CD4-positive, alpha-beta T cell (primary cell): ENCODE measurements at regions of chr4 and their contacts with region 1.

Region 1: GRCh38 chr4:98260579-98261290 is 449 bp upstream of the RAP1GDS1 start:
- DNase-seq: peak in 13 of 14 experiments; percentile 76 to 96 (median 89)
- ATAC-seq: peak; percentile 68
- H3K4me3 ChIP-seq: peak overlapping the region; percentile 96
- H3K4me3 Mint-ChIP-seq: peak overlapping the region; percentile 95
- H3K27ac ChIP-seq: peak overlapping the region; percentile 81 to 82
- H3K27ac Mint-ChIP-seq: peak overlapping the region; percentile 88
- H3K4me1 ChIP-seq: peaks cover 19% of the 10 kb centered on the region
- H3K4me1 Mint-ChIP-seq: peaks cover 61% of the 10 kb centered on the region
- H3K27me3 ChIP-seq: no peaks in the 10 kb centered on the region
- H3K27me3 Mint-ChIP-seq: no peaks in the 10 kb centered on the region
- CTCF ChIP-seq: no peak

Region 2: DNA sequence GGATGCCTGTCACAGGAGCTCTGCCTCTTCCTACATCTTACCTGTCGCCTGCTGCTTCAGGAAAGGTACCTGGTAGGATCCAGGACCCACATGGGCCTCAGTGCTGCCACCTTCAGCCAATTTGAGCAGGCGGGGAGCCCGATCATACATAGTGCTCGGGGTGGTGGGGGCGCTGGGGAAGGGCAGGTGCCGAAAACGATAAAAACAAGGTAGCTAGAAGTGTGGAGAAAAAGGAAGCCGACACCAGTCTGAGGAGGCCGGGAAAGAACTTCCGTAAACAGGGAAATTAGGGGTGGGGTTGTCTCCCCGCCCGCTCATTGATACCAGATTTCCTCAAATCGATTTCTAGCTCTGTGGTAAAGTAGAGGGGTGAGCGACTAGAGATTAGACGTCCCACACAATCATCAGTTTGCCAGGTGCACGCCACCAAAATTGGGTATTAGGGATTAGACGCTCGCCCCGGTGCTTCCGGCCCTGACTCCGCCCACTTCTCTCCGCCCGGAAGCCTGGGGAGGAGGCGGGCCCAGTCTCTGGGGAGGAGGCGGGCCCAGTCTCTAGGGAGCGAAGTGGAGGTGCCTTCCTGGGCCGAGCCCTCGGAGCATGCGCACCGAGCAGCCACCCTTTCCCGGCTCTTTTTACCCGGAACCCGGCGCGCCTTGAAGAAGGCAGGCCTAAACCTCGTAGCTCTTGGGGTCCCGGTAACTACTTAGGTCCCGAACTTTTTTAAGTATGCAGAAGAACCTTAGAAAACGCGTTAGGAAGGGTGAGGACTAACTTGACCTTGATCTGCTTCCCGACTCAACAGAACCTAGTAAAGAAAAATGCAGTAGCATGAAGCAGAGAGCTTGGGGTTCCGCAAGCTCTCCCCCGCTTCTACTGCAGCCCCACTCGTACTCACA is 117.5 kb before region 1 on chr4 and contains the start of gene STPG2:
- CTCF ChIA-PET with region 1: interaction called, 5 read pairs
- POLR2A ChIA-PET with region 1: interaction called, 29 read pairs
- intact Hi-C with region 1: loop called (anchors 2 to 5 kb)
- DNase-seq: peak; percentile 85 to 97 (median 94)
- ATAC-seq: peak; percentile 98
- H3K4me3 ChIP-seq: peak within 1 kb of the TSS; percentile 88
- H3K4me3 Mint-ChIP-seq: peak within 1 kb of the TSS; percentile 90
- H3K27ac ChIP-seq: peak within 1 kb of the TSS; percentile 75 to 96
- H3K27ac Mint-ChIP-seq: peak within 1 kb of the TSS; percentile 93
- H3K4me1 ChIP-seq: peaks cover 17% of the 10 kb centered on the region
- H3K4me1 Mint-ChIP-seq: peaks cover 21% of the 10 kb centered on the region
- H3K27me3 ChIP-seq: no peaks in the 10 kb centered on the region
- H3K27me3 Mint-ChIP-seq: no peaks in the 10 kb centered on the region
- CTCF ChIP-seq: peak; percentile 73
- total RNA-seq, gene STPG2: 0.22 to 0.28 TPM

Region 3: GRCh38 chr4:98203332-98204235 is 57.2 kb before region 1 on chr4:
- CTCF ChIA-PET with region 1: no interaction called
- POLR2A ChIA-PET with region 1: interaction called, 19 read pairs
- intact Hi-C with region 1: no loop called
- DNase-seq: peak in 2 of 14 experiments; percentile 1 to 9
- ATAC-seq: peak; percentile 70
- H3K4me3 ChIP-seq: peak overlapping the region; percentile 13
- H3K4me3 Mint-ChIP-seq: peak overlapping the region; percentile 32
- H3K27ac ChIP-seq: peak overlapping the region in 1 of 2 donors; percentile 13
- H3K27ac Mint-ChIP-seq: peak overlapping the region; percentile 82
- H3K4me1 ChIP-seq: no peaks in the 10 kb centered on the region
- H3K4me1 Mint-ChIP-seq: peaks cover 14% of the 10 kb centered on the region
- H3K27me3 ChIP-seq: no peaks in the 10 kb centered on the region
- H3K27me3 Mint-ChIP-seq: no peaks in the 10 kb centered on the region
- CTCF ChIP-seq: no peak

Region 4: DNA sequence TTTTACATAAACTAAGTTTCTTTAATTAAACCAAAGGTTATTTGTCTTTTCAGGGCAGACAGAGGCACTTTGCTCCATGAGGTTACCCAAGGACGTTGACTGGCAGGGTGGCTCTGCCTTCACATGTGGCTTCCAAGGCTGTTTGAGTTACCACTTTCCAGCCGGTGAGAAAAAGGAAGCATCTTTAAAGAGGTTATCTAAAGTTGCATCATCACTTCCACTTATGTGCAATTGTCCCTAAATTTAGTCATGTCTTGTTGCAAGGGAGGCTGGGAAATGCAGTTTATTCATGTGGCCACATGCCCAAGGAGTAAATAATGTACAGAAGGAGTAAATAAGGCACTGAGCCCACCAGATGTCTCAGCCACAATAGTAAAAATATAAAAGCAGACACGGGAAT is 28.5 kb before region 1 on chr4:
- CTCF ChIA-PET with region 1: no interaction called
- POLR2A ChIA-PET with region 1: no interaction called
- intact Hi-C with region 1: no loop called
- DNase-seq: peak in 3 of 14 experiments; percentile 11 to 30 (median 28)
- ATAC-seq: no peak
- H3K4me3 ChIP-seq: no peak overlapping the region
- H3K4me3 Mint-ChIP-seq: no peak overlapping the region
- H3K27ac ChIP-seq: no peak overlapping the region
- H3K27ac Mint-ChIP-seq: no peak overlapping the region
- H3K4me1 ChIP-seq: no peaks in the 10 kb centered on the region
- H3K4me1 Mint-ChIP-seq: no peaks in the 10 kb centered on the region
- H3K27me3 ChIP-seq: no peaks in the 10 kb centered on the region
- H3K27me3 Mint-ChIP-seq: no peaks in the 10 kb centered on the region
- CTCF ChIP-seq: no peak

Region 5: GRCh38 chr4:98352396-98352795 is 91.7 kb after region 1 on chr4:
- CTCF ChIA-PET with region 1: no interaction called
- POLR2A ChIA-PET with region 1: interaction called, 3 read pairs
- intact Hi-C with region 1: loop called in 1 of 2 experiments (anchors 10 kb)
- DNase-seq: no peak
- ATAC-seq: no peak
- H3K4me3 ChIP-seq: no peak overlapping the region
- H3K4me3 Mint-ChIP-seq: no peak overlapping the region
- H3K27ac ChIP-seq: no peak overlapping the region
- H3K27ac Mint-ChIP-seq: no peak overlapping the region
- H3K4me1 ChIP-seq: no peaks in the 10 kb centered on the region
- H3K4me1 Mint-ChIP-seq: peaks cover 21% of the 10 kb centered on the region
- H3K27me3 ChIP-seq: no peaks in the 10 kb centered on the region
- H3K27me3 Mint-ChIP-seq: no peaks in the 10 kb centered on the region
- CTCF ChIP-seq: no peak

Region 6: DNA sequence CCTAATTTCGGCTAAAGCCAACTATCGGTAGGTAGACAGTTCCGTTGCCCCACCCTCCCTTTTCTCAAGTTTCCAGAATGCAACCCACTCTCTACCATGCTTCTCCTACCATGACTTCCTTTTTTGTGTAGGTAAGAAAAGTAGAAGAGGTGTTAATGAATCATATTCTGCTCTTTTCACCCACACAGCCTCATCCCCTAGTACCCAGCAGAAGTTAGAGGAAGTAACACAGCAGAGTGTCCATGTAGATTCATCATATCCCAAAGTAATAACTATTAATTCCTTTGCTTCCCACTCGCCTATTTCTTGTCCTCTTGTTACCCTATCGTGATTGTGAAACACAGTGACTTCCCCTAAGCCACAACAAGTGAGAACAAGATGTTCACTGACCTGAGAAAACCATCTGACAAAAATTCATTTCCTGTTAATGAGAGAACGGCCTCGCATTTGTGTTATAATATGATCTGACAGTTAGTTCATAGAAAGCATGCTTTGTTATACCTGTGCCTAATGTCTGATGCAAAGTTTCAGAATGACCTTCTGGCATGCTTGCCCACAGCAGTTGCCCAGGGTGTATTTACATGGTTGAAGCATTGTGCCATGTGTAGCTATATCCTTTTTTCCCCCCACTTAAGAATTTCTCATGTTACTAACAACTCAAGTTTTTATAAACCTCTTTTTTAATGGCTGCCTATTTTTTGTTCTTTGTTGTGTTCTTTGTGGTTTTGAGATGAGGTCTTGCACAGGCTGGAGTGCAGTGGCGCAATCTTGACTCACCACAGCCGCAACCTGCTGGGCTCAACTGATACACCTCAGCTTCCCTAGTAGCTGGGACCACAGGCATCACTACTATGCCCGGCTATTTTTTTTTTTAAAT is 186.0 kb after region 1 on chr4:
- CTCF ChIA-PET with region 1: no interaction called
- POLR2A ChIA-PET with region 1: interaction called, 9 read pairs
- intact Hi-C with region 1: loop called in 1 of 2 experiments (anchors 5 kb)
- DNase-seq: peak; percentile 27 to 86 (median 49)
- ATAC-seq: peak; percentile 88
- H3K4me3 ChIP-seq: peak overlapping the region; percentile 9
- H3K4me3 Mint-ChIP-seq: peak overlapping the region; percentile 28
- H3K27ac ChIP-seq: peak overlapping the region in 1 of 2 donors; percentile 48
- H3K27ac Mint-ChIP-seq: peak overlapping the region; percentile 78
- H3K4me1 ChIP-seq: peaks cover 42% of the 10 kb centered on the region
- H3K4me1 Mint-ChIP-seq: peaks cover 35% of the 10 kb centered on the region
- H3K27me3 ChIP-seq: no peaks in the 10 kb centered on the region
- H3K27me3 Mint-ChIP-seq: no peaks in the 10 kb centered on the region
- CTCF ChIP-seq: no peak

Region 7: DNA sequence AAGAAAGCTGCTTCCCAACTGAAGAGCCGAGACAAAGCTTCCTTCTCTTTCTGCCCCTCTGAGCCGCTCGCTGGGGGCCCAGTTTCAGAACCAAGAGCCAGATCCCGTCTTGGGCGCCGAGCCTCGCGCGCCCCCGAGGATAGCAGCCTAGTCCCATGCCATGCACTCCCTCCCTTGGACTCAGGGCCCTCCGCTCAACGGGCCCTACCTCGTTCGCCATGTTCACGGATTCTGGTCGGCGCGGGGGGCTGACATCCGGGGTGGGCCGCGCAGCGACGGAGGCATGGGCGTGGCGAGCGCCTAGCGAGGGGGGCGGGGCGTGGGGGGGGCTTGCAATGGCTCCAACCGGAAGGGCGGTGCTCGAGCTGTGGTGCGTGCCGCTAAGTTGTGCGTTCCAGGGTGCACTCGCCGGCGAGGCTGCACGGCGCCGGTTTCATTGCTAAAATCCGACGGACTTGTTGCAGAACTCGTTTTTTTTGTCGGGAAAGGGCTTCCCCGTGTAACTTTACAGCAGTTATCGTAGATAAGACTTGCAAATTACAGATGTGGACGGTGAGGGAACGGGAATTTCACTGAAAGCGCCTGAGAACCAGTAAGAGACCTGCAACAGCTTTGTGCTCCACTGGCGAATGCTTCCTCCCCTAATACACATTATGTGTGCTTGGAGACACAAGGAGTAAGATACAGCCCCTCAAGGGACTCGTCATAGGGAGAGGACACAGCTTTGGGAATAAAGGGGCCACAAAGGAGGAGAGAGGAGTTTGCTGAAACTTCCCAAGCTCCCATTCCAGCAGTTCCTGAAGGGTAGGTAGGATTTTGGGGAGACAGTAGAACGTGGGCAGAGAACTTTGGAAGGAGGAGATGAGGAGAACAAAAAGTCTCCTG is 828.0 kb after region 1 on chr4 and contains the start of gene ADH5:
- CTCF ChIA-PET with region 1: no interaction called
- POLR2A ChIA-PET with region 1: interaction called, 14 read pairs
- intact Hi-C with region 1: loop called (anchors 5 kb)
- DNase-seq: peak; percentile 86 to 96 (median 91)
- ATAC-seq: peak; percentile 95
- H3K4me3 ChIP-seq: peak within 1 kb of the TSS; percentile 93
- H3K4me3 Mint-ChIP-seq: peak within 1 kb of the TSS; percentile 95
- H3K27ac ChIP-seq: peak within 1 kb of the TSS; percentile 76 to 82
- H3K27ac Mint-ChIP-seq: peak within 1 kb of the TSS; percentile 93
- H3K4me1 ChIP-seq: peaks cover 25% of the 10 kb centered on the region
- H3K4me1 Mint-ChIP-seq: peaks cover 65% of the 10 kb centered on the region
- H3K27me3 ChIP-seq: no peaks in the 10 kb centered on the region
- H3K27me3 Mint-ChIP-seq: no peaks in the 10 kb centered on the region
- CTCF ChIP-seq: no peak
- total RNA-seq, gene ADH5: 49.1 to 52.0 TPM

Region 8: GRCh38 chr4:99438405-99438780 is 1177.7 kb after region 1 on chr4:
- CTCF ChIA-PET with region 1: no interaction called
- POLR2A ChIA-PET with region 1: no interaction called
- intact Hi-C with region 1: no loop called
- DNase-seq: no peak
- ATAC-seq: no peak
- H3K4me3 ChIP-seq: no peak overlapping the region
- H3K4me3 Mint-ChIP-seq: no peak overlapping the region
- H3K27ac ChIP-seq: no peak overlapping the region
- H3K27ac Mint-ChIP-seq: no peak overlapping the region
- H3K4me1 ChIP-seq: no peaks in the 10 kb centered on the region
- H3K4me1 Mint-ChIP-seq: no peaks in the 10 kb centered on the region
- H3K27me3 ChIP-seq: no peaks in the 10 kb centered on the region
- H3K27me3 Mint-ChIP-seq: no peaks in the 10 kb centered on the region
- CTCF ChIP-seq: no peak